Thyroid gland (tissue), 4 donors: ENCODE measurements at regions of chr3 and their contacts with region 1.

Region 1: GRCh38 chr3:149771652-149772271 is 19.5 kb upstream of the COMMD2 start:
- DNase-seq: peak; percentile 40 to 49
- H3K4me3 ChIP-seq: no peak overlapping the region
- H3K27ac ChIP-seq: no peak overlapping the region
- H3K4me1 ChIP-seq: no peaks in the 10 kb centered on the region
- H3K27me3 ChIP-seq: no peaks in the 10 kb centered on the region
- CTCF ChIP-seq: peak; percentile 56 to 74 (median 68)
- POLR2A ChIP-seq: no peak

Region 2: DNA sequence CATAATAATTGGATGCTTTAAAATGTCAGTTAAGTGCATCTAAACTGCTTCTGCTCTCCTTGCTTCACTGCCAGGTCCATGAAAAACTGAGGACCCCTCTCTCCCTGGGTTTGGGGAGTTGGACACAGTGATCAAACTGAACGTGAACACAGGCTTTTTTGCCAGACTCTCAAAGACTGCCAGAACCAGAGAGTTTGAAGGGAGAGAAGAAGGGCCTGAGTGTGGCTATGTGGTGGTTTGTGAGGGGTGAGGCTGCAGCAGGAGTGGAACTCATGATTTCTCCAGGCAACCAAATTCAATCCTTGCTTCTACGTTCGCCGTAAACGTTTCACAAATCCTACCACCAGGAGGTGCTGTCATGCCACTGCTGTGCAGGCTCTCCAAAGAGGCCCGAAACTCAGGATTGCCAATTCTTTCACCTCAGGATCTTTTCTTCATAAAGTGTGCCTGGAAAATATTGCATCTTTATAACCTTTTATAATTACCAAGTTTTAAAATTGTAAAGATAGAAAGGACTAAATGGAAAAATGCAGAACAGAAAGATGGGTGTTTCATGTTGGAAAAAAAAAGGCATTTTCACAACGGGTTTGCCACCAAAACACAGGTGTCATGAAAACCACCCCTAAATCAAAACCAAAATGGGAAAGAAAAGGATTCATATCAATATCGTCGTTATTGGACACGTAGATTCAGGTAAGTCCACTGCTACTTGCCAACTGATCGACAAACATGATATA is 277.6 kb before region 1 on chr3:
- intact Hi-C with region 1: loop called (anchors 5 kb)
- DNase-seq: peak; percentile 59 to 77
- H3K4me3 ChIP-seq: no peak overlapping the region
- H3K27ac ChIP-seq: no peak overlapping the region
- H3K4me1 ChIP-seq: no peaks in the 10 kb centered on the region
- H3K27me3 ChIP-seq: no peaks in the 10 kb centered on the region
- CTCF ChIP-seq: peak; percentile 67 to 90 (median 86)
- POLR2A ChIP-seq: no peak

Region 3: DNA sequence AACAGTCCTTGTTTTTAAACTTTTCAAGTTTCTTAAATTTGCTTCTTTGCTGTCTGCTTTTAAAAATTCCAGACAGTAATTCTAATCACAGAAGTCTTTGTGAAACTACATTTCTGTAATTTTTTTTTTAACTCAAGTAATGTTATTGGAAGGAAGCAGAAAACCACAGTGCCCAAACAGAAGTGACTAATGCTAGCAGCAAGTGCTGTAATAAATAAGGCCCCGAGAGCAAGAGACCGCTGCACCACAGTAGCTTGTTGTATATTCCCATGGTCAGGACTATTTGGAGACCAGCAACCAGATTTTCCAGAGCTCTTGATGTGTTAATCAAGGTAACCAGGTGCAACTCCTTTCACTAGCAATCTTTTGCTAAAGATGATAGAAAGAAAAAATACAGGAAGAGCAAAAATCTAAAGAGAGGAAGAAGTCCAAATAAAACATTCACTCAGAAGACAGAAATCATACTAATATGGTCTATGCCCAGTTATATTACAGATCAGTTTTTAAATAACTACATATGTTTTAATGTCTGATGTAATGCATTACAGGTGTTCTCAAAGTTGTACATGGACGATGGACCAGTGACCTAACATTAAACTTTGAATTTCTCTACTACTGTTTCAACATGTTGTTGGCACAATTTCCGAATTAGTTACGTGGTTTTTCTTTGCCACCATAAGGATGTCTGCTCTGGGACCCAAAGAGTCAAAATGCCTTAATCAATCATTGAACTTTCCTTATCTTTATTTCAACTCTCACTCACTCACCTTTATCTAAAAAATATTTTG is 150.3 kb before region 1 on chr3:
- intact Hi-C with region 1: no loop called
- DNase-seq: no peak
- H3K4me3 ChIP-seq: no peak overlapping the region
- H3K27ac ChIP-seq: peak overlapping the region in 1 of 3 donors; percentile 3
- H3K4me1 ChIP-seq: peaks cover 17 to 53% of the 10 kb centered on the region in 2 donors
- H3K27me3 ChIP-seq: no peaks in the 10 kb centered on the region
- CTCF ChIP-seq: no peak
- POLR2A ChIP-seq: no peak

Region 4: DNA sequence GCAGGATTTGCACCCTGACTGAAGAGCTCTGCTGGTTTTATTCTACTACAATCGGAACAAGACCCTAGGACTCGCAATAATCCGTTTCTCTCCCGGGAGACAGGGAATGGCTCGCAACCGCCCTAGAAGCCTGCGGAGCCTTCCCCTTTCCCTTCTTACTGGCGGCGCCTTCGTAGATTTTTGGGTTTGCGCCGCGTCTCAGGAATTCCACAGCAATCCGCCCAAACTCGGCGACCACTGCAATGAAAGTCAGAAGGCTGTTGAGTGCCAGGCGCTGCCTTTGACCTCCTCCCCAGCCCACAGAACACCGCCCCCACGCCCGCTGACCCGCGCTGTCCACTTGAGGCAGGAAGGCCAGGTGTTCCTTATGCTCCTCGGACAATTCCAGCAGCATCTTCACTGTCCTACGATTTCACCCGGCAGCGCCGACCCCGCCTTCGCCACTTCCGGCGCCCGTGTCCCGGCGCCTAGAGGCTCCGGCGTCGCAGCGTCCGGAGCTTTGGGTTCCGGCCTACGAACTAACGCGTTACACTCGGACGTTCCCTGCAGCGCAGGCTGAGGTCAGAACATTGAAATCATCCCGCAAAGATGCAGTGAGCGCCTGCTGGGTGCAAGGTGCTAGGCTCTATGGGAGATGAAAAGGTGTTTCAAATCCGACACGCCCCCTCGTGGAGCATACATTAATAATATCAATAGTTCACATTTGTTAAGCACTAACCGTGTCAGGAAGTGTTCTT is 19.5 kb before region 1 on chr3 and contains the start of gene COMMD2:
- intact Hi-C with region 1: no loop called
- DNase-seq: peak; percentile 66 to 69
- H3K4me3 ChIP-seq: peak within 1 kb of the TSS; percentile 25 to 65 (median 61)
- H3K27ac ChIP-seq: peak within 1 kb of the TSS; percentile 14 to 59 (median 57)
- H3K4me1 ChIP-seq: peaks cover 0 to 6% of the 10 kb centered on the region in 2 donors
- H3K27me3 ChIP-seq: no peaks in the 10 kb centered on the region
- CTCF ChIP-seq: peak in 4 of 6 experiments; percentile 6 to 38 (median 26)
- POLR2A ChIP-seq: peak in 1 of 2 donors; percentile 68
- total RNA-seq, gene COMMD2: 36.4 to 56.5 (median 45.6) TPM

Region 5: DNA sequence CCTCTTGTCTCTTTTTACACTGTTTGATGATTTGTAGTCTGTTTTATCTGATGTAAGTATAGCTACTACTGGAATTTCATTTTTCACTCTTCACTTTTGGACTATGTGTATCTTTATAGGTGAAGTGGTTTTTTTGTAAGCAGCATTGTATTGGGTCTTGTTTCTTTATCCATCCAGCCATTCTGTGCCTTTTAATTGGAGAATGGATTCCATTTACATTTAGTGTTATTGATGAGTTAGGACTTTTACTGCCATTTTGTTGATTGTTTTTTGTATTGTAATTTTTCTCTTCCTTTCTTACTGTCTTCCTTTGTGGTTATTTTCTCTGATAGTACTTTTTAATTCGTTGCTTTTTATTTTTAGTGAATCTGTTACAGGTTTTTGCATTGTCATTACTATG is 95.8 kb after region 1 on chr3:
- intact Hi-C with region 1: no loop called
- DNase-seq: no peak
- H3K4me3 ChIP-seq: no peak overlapping the region
- H3K27ac ChIP-seq: no peak overlapping the region
- H3K4me1 ChIP-seq: no peaks in the 10 kb centered on the region
- H3K27me3 ChIP-seq: no peaks in the 10 kb centered on the region
- CTCF ChIP-seq: no peak
- POLR2A ChIP-seq: no peak

Region 6: DNA sequence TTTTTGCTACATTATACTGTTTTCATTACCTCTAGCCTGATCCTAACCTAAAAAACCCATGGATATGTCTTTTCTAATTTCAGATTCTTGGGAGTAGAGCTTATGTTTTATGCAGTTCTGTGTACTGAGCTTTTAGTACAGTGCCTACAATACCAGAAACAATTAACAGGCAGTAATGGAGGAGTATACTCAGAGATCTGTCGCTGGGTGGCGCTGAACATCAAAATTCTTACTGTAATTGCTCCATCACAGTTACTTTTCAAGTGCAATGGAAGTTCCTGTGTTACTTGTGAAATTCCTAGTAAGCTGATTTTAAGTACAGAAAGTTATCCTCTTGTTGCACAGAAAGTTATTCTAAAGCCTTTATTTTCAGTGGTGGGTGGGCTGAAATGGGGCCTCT is 108.1 kb after region 1 on chr3:
- intact Hi-C with region 1: no loop called
- DNase-seq: peak; percentile 53 to 78
- H3K4me3 ChIP-seq: no peak overlapping the region
- H3K27ac ChIP-seq: no peak overlapping the region
- H3K4me1 ChIP-seq: no peaks in the 10 kb centered on the region
- H3K27me3 ChIP-seq: no peaks in the 10 kb centered on the region
- CTCF ChIP-seq: peak in 4 of 6 experiments; percentile 32 to 60 (median 51)
- POLR2A ChIP-seq: no peak